WTC11 (cell line): ENCODE measurements at regions of chr17 and their contacts with region 1.

Region 1: DNA sequence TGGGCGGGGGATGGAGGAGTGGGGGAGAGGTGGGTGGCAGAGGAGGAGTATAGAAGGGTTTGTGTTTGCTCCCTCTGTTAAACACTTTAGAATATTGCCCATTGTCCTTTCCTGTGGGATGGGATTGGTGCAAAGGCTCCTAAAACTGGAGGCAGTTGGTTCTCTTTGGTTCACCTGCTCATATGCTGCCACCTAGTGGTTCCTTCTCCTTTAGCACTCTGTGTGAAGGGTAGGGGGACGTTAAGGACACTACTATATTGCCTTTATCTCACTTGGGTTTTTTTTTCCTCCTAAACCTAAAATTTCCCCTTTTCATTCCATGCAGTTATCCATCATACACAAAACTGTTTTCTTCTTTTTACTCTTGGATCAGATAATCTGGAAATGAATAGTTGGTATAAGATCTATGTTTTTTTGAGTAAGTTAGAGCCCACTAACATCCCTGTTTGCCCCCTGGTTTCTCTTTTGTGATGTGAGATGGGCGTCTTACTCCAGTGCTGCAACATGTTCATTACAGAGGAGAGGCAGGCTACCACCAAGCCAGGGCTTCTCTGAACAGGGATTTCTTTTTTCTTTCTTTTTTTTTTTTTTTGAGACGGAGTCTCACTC is 23.8 kb downstream of the SNX11 start:
- DNase-seq: peak; percentile 77
- ATAC-seq: peak; percentile 97
- H3K4me3 Mint-ChIP-seq: no peak overlapping the region
- H3K27ac Mint-ChIP-seq: peak overlapping the region; percentile 25; the same call in 1 of the 2 replicates
- H3K4me1 Mint-ChIP-seq: peaks cover 9% of the 10 kb centered on the region
- H3K27me3 Mint-ChIP-seq: no peaks in the 10 kb centered on the region; the same call in 1 of the 2 replicates
- CTCF ChIP-seq: peak; percentile 58

Region 2: DNA sequence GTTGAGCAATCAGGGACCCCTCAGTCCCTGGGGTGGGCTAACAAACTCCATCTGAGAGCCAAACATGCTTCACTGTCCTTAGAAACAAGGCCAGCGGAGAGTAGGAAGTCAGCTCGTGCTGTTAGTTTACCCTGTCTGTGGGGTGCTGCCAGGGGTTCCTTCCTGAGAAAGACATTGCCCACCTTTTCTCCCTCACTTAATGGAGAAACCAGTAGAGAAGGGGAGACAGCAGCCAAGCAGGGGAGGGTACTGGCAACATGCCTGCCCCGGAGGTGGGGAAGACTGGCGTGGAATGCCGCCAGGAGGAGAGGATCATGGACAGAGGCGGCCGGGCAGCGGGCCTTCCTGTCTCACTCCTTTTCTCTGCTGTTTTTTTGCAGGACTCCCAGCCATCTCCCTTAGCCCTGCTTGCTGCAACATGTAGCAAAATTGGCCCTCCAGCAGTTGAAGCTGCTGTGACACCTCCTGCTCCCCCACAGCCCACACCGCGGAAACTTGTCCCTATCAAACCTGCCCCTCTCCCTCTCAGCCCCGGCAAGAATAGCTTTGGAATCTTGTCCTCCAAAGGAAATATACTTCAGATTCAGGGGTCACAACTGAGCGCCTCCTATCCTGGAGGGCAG is 215.4 kb before region 1 on chr17:
- CTCF ChIA-PET with region 1: no interaction called
- POLR2A ChIA-PET with region 1: no interaction called
- DNase-seq: no peak
- ATAC-seq: no peak
- H3K4me3 Mint-ChIP-seq: no peak overlapping the region
- H3K27ac Mint-ChIP-seq: no peak overlapping the region
- H3K4me1 Mint-ChIP-seq: no peaks in the 10 kb centered on the region
- H3K27me3 Mint-ChIP-seq: no peaks in the 10 kb centered on the region
- CTCF ChIP-seq: no peak

Region 3: DNA sequence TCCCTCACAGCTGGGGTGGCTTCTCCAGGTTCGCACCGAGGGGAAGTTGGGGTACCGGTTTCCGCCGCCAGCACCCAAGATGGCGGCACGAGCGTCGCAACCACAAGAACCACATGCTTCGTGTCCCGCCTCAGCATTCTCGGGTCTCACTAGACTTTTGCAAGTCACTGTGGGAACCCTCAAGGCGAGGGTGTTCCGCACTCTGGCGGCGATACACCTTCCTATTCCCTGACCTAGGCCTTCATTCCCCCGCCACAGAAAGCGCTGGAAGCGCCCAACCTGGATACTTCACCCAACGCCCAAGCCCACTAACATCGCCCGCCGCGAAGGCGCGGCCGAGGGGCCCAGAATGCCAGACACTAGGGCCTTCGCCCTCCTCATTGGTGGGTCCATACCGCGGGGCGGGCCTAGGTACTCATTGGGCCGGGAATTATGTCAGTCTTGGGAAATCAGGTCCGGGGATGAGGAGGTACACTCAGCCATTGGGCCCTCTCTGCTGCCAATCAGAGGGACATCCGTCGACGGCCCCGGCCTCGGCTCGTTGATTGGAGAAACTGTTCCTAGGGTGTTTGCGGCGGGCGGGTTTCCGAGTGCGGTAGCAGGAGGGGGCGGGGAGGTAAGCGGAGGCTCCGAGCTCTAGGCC is 83.5 kb before region 1 on chr17 and contains the start of gene NFE2L1:
- CTCF ChIA-PET with region 1: no interaction called
- POLR2A ChIA-PET with region 1: no interaction called
- DNase-seq: peak; percentile 99
- ATAC-seq: peak; percentile 95
- H3K4me3 Mint-ChIP-seq: peak within 1 kb of the TSS; percentile 93
- H3K27ac Mint-ChIP-seq: peak within 1 kb of the TSS; percentile 100
- H3K4me1 Mint-ChIP-seq: peaks cover 55% of the 10 kb centered on the region
- H3K27me3 Mint-ChIP-seq: no peaks in the 10 kb centered on the region
- CTCF ChIP-seq: no peak
- total RNA-seq, gene NFE2L1: 130 to 149 TPM (median 131 TPM) in 3 replicates

Region 4: GRCh38 chr17:48148854-48149786 is 17.8 kb after region 1 on chr17:
- CTCF ChIA-PET with region 1: interaction called, 15 read pairs
- POLR2A ChIA-PET with region 1: no interaction called
- DNase-seq: peak; percentile 36
- ATAC-seq: peak; percentile 65
- H3K4me3 Mint-ChIP-seq: no peak overlapping the region
- H3K27ac Mint-ChIP-seq: no peak overlapping the region
- H3K4me1 Mint-ChIP-seq: peaks cover 27% of the 10 kb centered on the region
- H3K27me3 Mint-ChIP-seq: peaks cover 1% of the 10 kb centered on the region
- CTCF ChIP-seq: no peak

Region 5: GRCh38 chr17:48194097-48194550 is 62.8 kb after region 1 on chr17:
- CTCF ChIA-PET with region 1: no interaction called
- POLR2A ChIA-PET with region 1: no interaction called
- DNase-seq: no peak
- ATAC-seq: no peak
- H3K4me3 Mint-ChIP-seq: no peak overlapping the region
- H3K27ac Mint-ChIP-seq: no peak overlapping the region
- H3K4me1 Mint-ChIP-seq: peaks cover 36% of the 10 kb centered on the region
- H3K27me3 Mint-ChIP-seq: peaks cover 71% of the 10 kb centered on the region
- CTCF ChIP-seq: no peak